IMR-90 (cell line): ENCODE measurements at regions of chr4 and their contacts with region 1.

Region 1: DNA sequence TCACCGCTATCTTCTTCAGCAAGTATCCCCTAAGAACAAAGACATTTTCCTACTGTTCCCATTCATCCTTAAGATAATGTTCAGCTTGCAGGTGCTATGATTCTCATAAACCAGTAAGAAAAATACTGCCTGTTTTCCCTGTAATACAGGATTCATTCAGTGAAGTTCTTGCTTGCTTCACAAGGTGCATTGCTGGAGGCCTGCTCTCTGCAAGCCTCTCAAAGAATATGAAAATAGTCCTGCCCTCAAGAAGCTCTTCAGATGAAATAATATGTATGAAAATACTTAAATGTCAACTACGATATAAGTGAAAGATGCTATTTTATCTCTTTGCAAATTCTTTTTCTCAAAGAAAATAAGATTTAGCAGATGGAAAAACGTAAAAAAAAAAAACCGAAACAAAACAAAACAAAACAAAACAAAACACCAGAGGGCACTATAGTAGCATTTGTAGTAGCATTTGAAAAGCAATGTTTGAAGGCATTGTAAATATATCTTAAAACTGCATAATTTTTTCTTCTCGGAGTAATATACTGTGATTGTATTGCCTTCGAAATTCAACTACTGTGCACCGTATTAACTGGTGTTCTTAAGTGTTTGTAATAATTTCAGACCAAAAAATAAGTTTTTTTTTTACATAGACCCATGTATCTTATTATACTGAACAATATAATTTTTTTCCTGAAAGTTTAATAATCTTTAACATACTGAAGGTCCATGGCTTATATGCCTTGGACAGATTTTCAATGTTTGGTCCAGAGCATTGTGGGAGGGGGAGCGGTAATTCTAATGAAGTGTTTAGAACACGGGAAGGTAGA is 26.0 kb downstream of the ADH4 start:
- DNase-seq: peak; percentile 35
- ATAC-seq: peak; percentile 37; the same call in 1 of the 2 replicates
- H3K4me3 ChIP-seq: no peak overlapping the region
- H3K27ac ChIP-seq: no peak overlapping the region; the same call in 1 of the 2 replicates
- H3K4me1 ChIP-seq: no peaks in the 10 kb centered on the region
- H3K27me3 ChIP-seq: no peaks in the 10 kb centered on the region
- CTCF ChIP-seq: peak; percentile 54
- POLR2A ChIP-seq: no peak
- RAD21 ChIP-seq: peak; percentile 54

Region 2: GRCh38 chr4:99067617-99068016 is 50.5 kb before region 1 on chr4:
- CTCF ChIA-PET with region 1: no interaction called
- POLR2A ChIA-PET with region 1: no interaction called
- dilution Hi-C with region 1: no loop called
- in situ Hi-C with region 1: no loop called
- intact Hi-C with region 1: no loop called
- DNase-seq: no peak
- ATAC-seq: no peak; the same call in 1 of the 2 replicates
- H3K4me3 ChIP-seq: no peak overlapping the region
- H3K27ac ChIP-seq: no peak overlapping the region
- H3K4me1 ChIP-seq: no peaks in the 10 kb centered on the region
- H3K27me3 ChIP-seq: no peaks in the 10 kb centered on the region
- CTCF ChIP-seq: no peak
- POLR2A ChIP-seq: no peak
- RAD21 ChIP-seq: no peak

Region 3: DNA sequence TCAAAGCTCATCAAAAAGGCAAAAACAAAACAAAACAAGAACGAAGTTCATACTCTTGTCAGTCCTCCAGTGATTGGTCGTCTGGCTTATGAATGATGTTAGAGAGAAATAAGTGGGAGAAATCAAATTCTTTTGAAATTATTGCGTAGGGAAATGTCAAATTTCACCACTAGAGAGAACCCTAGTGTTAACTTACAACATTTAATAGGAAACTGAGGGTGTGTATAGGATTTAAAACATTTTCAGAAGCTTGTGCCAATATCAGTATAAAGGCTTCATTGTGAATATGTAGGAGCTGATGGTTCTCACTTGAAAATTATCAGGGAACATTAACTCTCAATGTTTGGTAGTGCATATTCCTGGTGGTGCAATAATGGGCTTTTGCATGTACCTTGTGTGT is 83.6 kb after region 1 on chr4:
- CTCF ChIA-PET with region 1: no interaction called
- POLR2A ChIA-PET with region 1: no interaction called
- dilution Hi-C with region 1: no loop called
- in situ Hi-C with region 1: no loop called
- intact Hi-C with region 1: loop called (anchors 5 kb)
- DNase-seq: peak; percentile 55
- ATAC-seq: peak; percentile 68
- H3K4me3 ChIP-seq: no peak overlapping the region
- H3K27ac ChIP-seq: peak overlapping the region; percentile 23; the same call in 1 of the 2 replicates
- H3K4me1 ChIP-seq: peaks cover 12% of the 10 kb centered on the region
- H3K27me3 ChIP-seq: no peaks in the 10 kb centered on the region
- CTCF ChIP-seq: peak; percentile 59
- POLR2A ChIP-seq: no peak
- RAD21 ChIP-seq: peak; percentile 54

Region 4: GRCh38 chr4:99414389-99414788 is 296.3 kb after region 1 on chr4:
- CTCF ChIA-PET with region 1: no interaction called
- POLR2A ChIA-PET with region 1: no interaction called
- dilution Hi-C with region 1: no loop called
- in situ Hi-C with region 1: loop called (anchors 5 kb)
- intact Hi-C with region 1: no loop called
- DNase-seq: no peak
- ATAC-seq: no peak; the same call in 1 of the 2 replicates
- H3K4me3 ChIP-seq: no peak overlapping the region
- H3K27ac ChIP-seq: no peak overlapping the region
- H3K4me1 ChIP-seq: no peaks in the 10 kb centered on the region
- H3K27me3 ChIP-seq: no peaks in the 10 kb centered on the region
- CTCF ChIP-seq: no peak
- POLR2A ChIP-seq: no peak
- RAD21 ChIP-seq: no peak